GM12878 (cell line): ENCODE measurements at regions of chr4 and their contacts with region 1.

Region 1: DNA sequence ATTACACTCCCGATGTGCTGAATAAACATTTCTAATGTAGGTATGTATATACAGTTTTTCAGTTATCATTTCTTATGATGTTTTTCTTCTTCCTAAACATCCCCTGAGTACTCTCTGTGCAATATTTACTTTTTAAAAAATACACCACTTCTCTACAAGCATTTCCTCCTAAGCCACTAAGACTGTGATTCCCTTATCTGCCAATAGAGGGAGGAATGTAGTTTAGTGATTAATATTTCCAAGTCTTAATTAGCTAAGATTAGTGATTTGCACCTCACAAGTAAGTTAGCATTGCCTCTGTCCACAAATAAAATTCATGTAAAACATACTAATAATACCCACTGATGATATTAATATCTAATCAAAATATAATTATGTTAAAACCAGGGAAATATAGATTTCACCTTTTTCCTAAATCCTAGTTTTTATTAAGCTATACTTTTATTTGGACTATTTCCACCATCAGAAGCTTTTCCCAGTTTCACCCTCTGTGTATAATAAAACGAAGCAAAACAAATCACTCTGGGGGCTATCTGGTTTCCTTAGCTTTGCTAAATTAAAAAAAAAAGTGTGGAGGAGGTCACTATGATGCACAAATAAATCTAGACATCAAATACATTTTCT is 909.1 kb downstream of the FAT4 start:
- DNase-seq: no peak
- ATAC-seq: peak; percentile 48; the same call in 1 of the 3 replicates
- H3K4me3 ChIP-seq: no peak overlapping the region
- H3K27ac ChIP-seq: no peak overlapping the region
- H3K4me1 ChIP-seq: no peaks in the 10 kb centered on the region
- H3K27me3 ChIP-seq: no peaks in the 10 kb centered on the region
- CTCF ChIP-seq: peak in 2 of 3 experiments; percentile 43; a peak in 3 of 6 replicates
- EP300 ChIP-seq: no peak
- POLR2A ChIP-seq: no peak
- RAD21 ChIP-seq: peak; percentile 6; the same call in 1 of the 2 replicates

Region 2: GRCh38 chr4:126192506-126192905 is 31.4 kb before region 1 on chr4:
- CTCF ChIA-PET with region 1: no interaction called
- POLR2A ChIA-PET with region 1: no interaction called
- RAD21 ChIA-PET with region 1: no interaction called
- SMC1A ChIA-PET with region 1: no interaction called
- in situ Hi-C with region 1: no loop called
- intact Hi-C with region 1: no loop called
- DNase-seq: no peak
- ATAC-seq: no peak
- H3K4me3 ChIP-seq: no peak overlapping the region
- H3K27ac ChIP-seq: no peak overlapping the region
- H3K4me1 ChIP-seq: no peaks in the 10 kb centered on the region
- H3K27me3 ChIP-seq: no peaks in the 10 kb centered on the region
- CTCF ChIP-seq: no peak
- EP300 ChIP-seq: no peak
- POLR2A ChIP-seq: no peak
- RAD21 ChIP-seq: no peak

Region 3: GRCh38 chr4:126405369-126405982 is 181.6 kb after region 1 on chr4:
- CTCF ChIA-PET with region 1: interaction called, 3 read pairs
- POLR2A ChIA-PET with region 1: no interaction called
- RAD21 ChIA-PET with region 1: no interaction called
- SMC1A ChIA-PET with region 1: no interaction called
- in situ Hi-C with region 1: no loop called
- intact Hi-C with region 1: loop called (anchors 5 kb)
- DNase-seq: no peak
- ATAC-seq: peak; percentile 94
- H3K4me3 ChIP-seq: no peak overlapping the region
- H3K27ac ChIP-seq: no peak overlapping the region
- H3K4me1 ChIP-seq: no peaks in the 10 kb centered on the region
- H3K27me3 ChIP-seq: no peaks in the 10 kb centered on the region
- CTCF ChIP-seq: peak; percentile 52 to 66 (median 56)
- EP300 ChIP-seq: no peak
- POLR2A ChIP-seq: no peak
- RAD21 ChIP-seq: peak; percentile 48; the same call in 1 of the 2 replicates

Region 4: DNA sequence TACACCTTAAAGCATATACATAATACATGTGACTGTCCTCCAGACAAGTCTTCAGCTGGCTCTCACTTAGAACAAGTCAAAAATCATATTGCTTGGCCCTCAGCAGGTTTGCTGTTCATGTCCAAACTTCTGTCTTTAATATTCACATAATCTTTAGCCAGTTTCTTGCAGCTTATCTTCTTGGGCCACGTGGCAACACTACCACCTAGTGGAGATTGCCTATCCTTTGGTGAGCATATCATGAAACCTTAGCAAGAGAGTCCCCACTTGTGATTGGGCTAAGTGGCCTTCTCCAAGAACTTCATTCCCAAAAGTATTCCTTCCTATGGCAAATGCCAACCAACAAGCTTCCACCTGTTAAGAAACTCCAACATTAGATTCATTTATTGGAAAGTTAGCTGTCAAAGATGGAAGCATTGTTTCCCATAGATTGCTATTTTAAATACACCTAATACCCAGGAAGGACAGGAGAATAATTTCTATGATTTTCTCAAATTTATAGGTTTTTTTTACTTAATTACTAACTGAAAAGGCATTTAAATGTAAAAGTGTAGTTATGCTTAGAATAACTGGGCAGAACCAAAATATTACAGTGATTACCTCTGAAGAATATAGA is 1176.9 kb after region 1 on chr4:
- CTCF ChIA-PET with region 1: no interaction called
- POLR2A ChIA-PET with region 1: no interaction called
- RAD21 ChIA-PET with region 1: interaction called, 3 read pairs
- SMC1A ChIA-PET with region 1: no interaction called
- in situ Hi-C with region 1: no loop called
- intact Hi-C with region 1: loop called (anchors 5 kb)
- DNase-seq: peak; percentile 9
- ATAC-seq: peak; percentile 88
- H3K4me3 ChIP-seq: no peak overlapping the region
- H3K27ac ChIP-seq: no peak overlapping the region
- H3K4me1 ChIP-seq: no peaks in the 10 kb centered on the region
- H3K27me3 ChIP-seq: no peaks in the 10 kb centered on the region
- CTCF ChIP-seq: peak; percentile 74 to 79 (median 76)
- EP300 ChIP-seq: no peak
- POLR2A ChIP-seq: no peak
- RAD21 ChIP-seq: peak; percentile 91